Activated naive CD4-positive, alpha-beta T cell treated with anti-CD3 and anti-CD28 coated beads, Interleukin-2, amount 10 ng/mL, durations not matched to agents 7 days and 5 days (primary cell): ENCODE measurements at regions of chr1 and their contacts with region 1.

Region 1: GRCh38 chr1:11037740-11038182 is 9.3 kb downstream of the MASP2 start:
- DNase-seq: peak; percentile 92
- H3K4me3 Mint-ChIP-seq: no peak overlapping the region
- H3K27ac Mint-ChIP-seq: no peak overlapping the region
- H3K4me1 Mint-ChIP-seq: peaks cover 7% of the 10 kb centered on the region
- H3K27me3 Mint-ChIP-seq: peaks cover 4% of the 10 kb centered on the region

Region 2: GRCh38 chr1:10877894-10878293 is 159.9 kb before region 1 on chr1:
- CTCF ChIA-PET with region 1: no interaction called
- DNase-seq: no peak
- H3K4me3 Mint-ChIP-seq: no peak overlapping the region
- H3K27ac Mint-ChIP-seq: no peak overlapping the region
- H3K4me1 Mint-ChIP-seq: no peaks in the 10 kb centered on the region
- H3K27me3 Mint-ChIP-seq: peaks cover 48% of the 10 kb centered on the region

Region 3: DNA sequence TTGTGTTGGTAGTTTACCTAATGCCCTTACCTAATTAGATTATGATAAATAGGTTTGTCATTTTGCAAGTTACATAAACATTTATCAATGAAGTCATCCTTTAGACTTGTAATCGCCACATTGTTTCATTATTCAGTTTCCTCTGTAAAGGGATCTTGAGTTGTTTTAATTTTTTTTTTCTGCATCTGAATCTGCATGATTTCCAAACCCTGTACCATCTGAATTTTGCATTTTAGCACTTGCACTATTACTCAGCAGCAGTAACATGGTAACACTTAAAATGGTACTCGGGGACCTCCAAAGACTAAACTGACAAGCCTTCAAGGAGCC is 12.9 kb before region 1 on chr1:
- CTCF ChIA-PET with region 1: interaction called, 10 read pairs
- DNase-seq: no peak
- H3K4me3 Mint-ChIP-seq: no peak overlapping the region
- H3K27ac Mint-ChIP-seq: no peak overlapping the region
- H3K4me1 Mint-ChIP-seq: peaks cover 4% of the 10 kb centered on the region
- H3K27me3 Mint-ChIP-seq: no peaks in the 10 kb centered on the region

Region 4: DNA sequence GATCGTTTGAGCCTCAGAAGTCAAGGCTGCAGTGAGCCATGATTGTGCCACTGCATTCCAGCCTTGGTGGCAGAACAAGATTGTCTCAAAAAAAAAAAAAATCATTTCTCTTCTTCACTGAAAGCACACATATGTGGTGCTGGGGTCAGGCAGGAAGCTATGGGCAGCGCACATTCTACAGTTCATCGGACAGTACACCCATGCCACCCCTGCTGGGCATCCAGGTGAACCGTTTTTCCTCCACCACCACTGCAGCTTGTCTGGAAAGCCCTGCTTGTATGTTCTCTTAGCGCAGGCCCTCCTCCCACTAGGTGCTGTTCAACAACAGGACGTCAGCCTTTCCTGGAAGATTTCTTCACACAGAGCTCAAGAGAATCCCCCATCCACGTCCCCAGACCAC is 38.5 kb after region 1 on chr1:
- CTCF ChIA-PET with region 1: interaction called, 13 read pairs
- DNase-seq: no peak
- H3K4me3 Mint-ChIP-seq: no peak overlapping the region
- H3K27ac Mint-ChIP-seq: no peak overlapping the region
- H3K4me1 Mint-ChIP-seq: no peaks in the 10 kb centered on the region
- H3K27me3 Mint-ChIP-seq: no peaks in the 10 kb centered on the region

Region 5: GRCh38 chr1:11248155-11248554 is 210.4 kb after region 1 on chr1:
- CTCF ChIA-PET with region 1: interaction called, 24 read pairs
- DNase-seq: no peak
- H3K4me3 Mint-ChIP-seq: no peak overlapping the region
- H3K27ac Mint-ChIP-seq: no peak overlapping the region
- H3K4me1 Mint-ChIP-seq: no peaks in the 10 kb centered on the region
- H3K27me3 Mint-ChIP-seq: no peaks in the 10 kb centered on the region

Region 6: GRCh38 chr1:11638122-11638521 is 600.4 kb after region 1 on chr1:
- CTCF ChIA-PET with region 1: interaction called, 101 read pairs
- DNase-seq: no peak
- H3K4me3 Mint-ChIP-seq: no peak overlapping the region
- H3K27ac Mint-ChIP-seq: no peak overlapping the region
- H3K4me1 Mint-ChIP-seq: peaks cover 2% of the 10 kb centered on the region
- H3K27me3 Mint-ChIP-seq: peaks cover 48% of the 10 kb centered on the region